K562 (cell line): ENCODE measurements at regions of chr15 and their contacts with region 1.

Region 1: GRCh38 chr15:37100109-37100965 is at the start of gene MEIS2:
- DNase-seq: peak; percentile 91 to 96 (median 94)
- ATAC-seq: peak; percentile 69
- H3K4me3 ChIP-seq: peak within 1 kb of the TSS; percentile 87
- H3K27ac ChIP-seq: peak within 1 kb of the TSS; percentile 99
- H3K4me1 ChIP-seq: peaks cover 13 to 46% of the 10 kb centered on the region in 2 experiments; a peak in 4 of 5 replicates
- H3K27me3 ChIP-seq: no peaks in the 10 kb centered on the region
- CTCF ChIP-seq: 0 out of 6 replicates have a peak, but pooled peaks of 1 of the 3 experiments have one; percentile 1
- EP300 ChIP-seq: peak; percentile 31; the same call in 1 of the 2 replicates
- POLR2A ChIP-seq: peak; percentile 90
- RAD21 ChIP-seq: no peak
- polyA plus RNA-seq, gene MEIS2: 7.5 to 8.4 TPM

Region 2: GRCh38 chr15:36428102-36428845 is 672.1 kb before region 1 on chr15:
- CTCF ChIA-PET with region 1: no interaction called
- POLR2A ChIA-PET with region 1: no interaction called
- in situ Hi-C with region 1: no loop called
- intact Hi-C with region 1: no loop called
- DNase-seq: peak; percentile 75 to 94 (median 82)
- ATAC-seq: peak; percentile 97
- H3K4me3 ChIP-seq: peak overlapping the region; percentile 12; the same call in 1 of the 2 replicates
- H3K27ac ChIP-seq: peak overlapping the region; percentile 82
- H3K4me1 ChIP-seq: peaks cover 13 to 47% of the 10 kb centered on the region in 2 experiments
- H3K27me3 ChIP-seq: no peaks in the 10 kb centered on the region
- CTCF ChIP-seq: no peak; a peak in 1 of 6 replicates
- EP300 ChIP-seq: peak; percentile 98
- POLR2A ChIP-seq: no peak
- RAD21 ChIP-seq: no peak; a peak in 1 of 4 replicates

Region 3: DNA sequence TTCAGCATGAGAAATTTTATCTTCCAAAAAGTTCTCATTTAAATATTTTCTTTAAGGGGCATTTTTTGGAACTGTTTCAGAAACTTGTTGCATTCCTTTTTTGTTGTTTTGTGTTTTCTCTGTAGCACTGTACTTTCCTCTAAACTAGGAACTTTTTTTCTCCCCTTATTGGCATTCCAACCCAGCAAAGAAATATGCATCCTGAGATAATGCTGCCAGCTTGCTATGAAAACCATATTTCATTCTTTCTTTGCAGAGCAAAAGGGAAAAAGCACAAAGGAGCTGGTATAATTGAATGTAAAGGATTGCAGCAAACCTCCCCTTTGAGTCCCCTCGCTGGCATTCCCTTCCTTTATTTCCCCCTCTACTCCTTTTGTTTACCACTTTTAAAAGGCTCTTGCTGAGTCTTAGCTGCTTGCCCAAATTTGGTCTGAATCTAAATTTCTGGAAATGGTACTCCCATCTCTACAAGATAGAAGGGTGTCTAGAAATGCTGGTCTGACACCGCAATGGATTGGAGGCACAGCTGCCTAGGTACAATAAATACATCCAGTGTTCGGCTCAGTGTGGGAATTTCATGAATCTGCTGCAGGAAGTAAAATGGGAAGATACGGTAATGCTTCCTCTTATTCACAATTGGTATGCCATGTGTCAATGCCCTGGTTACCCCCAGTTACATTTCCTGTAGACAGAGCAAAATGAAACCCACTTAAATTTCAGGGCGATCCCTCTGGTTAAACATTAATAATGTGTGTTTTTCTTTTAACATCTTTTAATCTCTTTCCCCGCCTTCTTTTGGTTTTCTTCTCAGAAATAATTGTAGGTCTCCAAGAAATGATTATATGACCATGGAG is 156.6 kb before region 1 on chr15:
- CTCF ChIA-PET with region 1: no interaction called
- POLR2A ChIA-PET with region 1: interaction called, 3 read pairs
- in situ Hi-C with region 1: no loop called
- intact Hi-C with region 1: loop called (anchors 10 kb)
- DNase-seq: no peak
- ATAC-seq: no peak
- H3K4me3 ChIP-seq: no peak overlapping the region
- H3K27ac ChIP-seq: no peak overlapping the region
- H3K4me1 ChIP-seq: peaks cover 0 to 18% of the 10 kb centered on the region in 2 experiments; a peak in 3 of 5 replicates
- H3K27me3 ChIP-seq: no peaks in the 10 kb centered on the region
- CTCF ChIP-seq: no peak
- EP300 ChIP-seq: no peak
- POLR2A ChIP-seq: no peak
- RAD21 ChIP-seq: no peak

Region 4: GRCh38 chr15:37731146-37731746 is 630.9 kb after region 1 on chr15:
- CTCF ChIA-PET with region 1: no interaction called
- POLR2A ChIA-PET with region 1: no interaction called
- in situ Hi-C with region 1: no loop called
- intact Hi-C with region 1: no loop called
- DNase-seq: no peak
- ATAC-seq: no peak
- H3K4me3 ChIP-seq: no peak overlapping the region
- H3K27ac ChIP-seq: no peak overlapping the region
- H3K4me1 ChIP-seq: no peaks in the 10 kb centered on the region
- H3K27me3 ChIP-seq: no peaks in the 10 kb centered on the region
- CTCF ChIP-seq: no peak
- EP300 ChIP-seq: no peak
- POLR2A ChIP-seq: no peak
- RAD21 ChIP-seq: no peak